AG04450 (cell line): ENCODE measurements at regions of chr16 and their contacts with region 1.

Region 1: GRCh38 chr16:19583665-19584300 is 28.3 kb downstream of the VPS35L start:
- DNase-seq: peak; percentile 18
- H3K4me3 ChIP-seq: no peak overlapping the region
- H3K27ac ChIP-seq: no peak overlapping the region
- H3K27me3 ChIP-seq: no peaks in the 10 kb centered on the region
- CTCF ChIP-seq: peak; percentile 94

Region 2: DNA sequence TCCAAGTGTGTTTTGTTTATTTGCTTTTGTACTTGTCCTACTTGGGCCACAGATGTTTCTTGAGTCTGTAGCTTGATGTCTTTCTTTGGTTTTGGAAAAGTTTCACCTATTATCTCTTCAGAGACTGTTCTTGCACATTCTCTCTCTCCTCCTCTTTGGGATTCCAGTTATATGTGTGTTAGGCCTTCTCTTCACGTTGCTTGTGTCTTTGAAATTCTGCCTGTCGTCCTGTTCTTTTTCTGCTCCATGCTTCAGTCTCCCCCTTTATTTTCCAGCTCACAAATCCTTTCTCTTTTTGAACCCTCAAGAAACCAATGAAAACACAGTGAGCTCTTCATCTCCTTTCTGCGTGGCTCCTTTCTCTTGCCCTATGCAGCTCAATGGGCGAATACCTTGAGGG is 20.4 kb before region 1 on chr16:
- CTCF ChIA-PET with region 1: interaction called, 15 read pairs
- POLR2A ChIA-PET with region 1: no interaction called
- DNase-seq: no peak
- H3K4me3 ChIP-seq: no peak overlapping the region
- H3K27ac ChIP-seq: no peak overlapping the region
- H3K27me3 ChIP-seq: no peaks in the 10 kb centered on the region
- CTCF ChIP-seq: no peak